ENCODE measurements at regions of chr9 and their contacts with region 1.

Region 1: DNA sequence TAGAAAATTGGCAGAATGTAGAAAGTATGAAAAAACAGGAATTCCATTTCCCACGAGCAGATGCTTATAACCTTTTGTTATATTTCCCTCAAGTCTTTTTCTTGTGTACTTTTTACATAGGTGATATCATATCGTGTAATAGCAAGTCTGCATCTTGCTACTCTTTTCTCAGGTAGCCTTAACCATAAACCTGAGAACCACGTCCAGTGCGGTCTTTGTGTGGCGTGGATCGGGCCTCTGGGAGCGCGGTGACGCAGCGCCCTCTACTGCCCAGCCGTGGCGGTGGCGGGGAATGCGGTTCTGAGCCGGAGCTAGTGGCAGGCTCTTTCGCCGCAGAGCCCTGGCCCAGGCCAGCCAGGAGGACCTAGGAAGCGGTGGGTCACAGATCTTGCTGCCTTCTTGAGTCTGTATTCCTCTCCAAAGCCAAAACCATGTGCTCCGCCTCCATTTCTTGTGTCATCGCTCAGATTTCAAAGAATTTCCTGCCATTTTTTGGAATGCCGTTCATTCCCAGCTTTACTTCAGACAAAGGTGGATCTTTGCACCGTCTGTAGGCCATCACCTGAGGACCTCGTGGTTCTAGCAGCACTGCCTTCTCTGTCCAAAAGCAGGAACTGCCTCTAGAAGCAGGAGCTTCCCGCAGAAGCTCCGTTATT is 71.9 kb downstream of the MVB12B start:
- DNase-seq: peak; percentile 74 to 98
- H3K4me3 ChIP-seq: no peak overlapping the region
- CTCF ChIP-seq: peak in 1 of 3 donors; percentile 90
- POLR2A ChIP-seq: no peak

Region 2: GRCh38 chr9:125400725-125401716 is 997.5 kb before region 1 on chr9:
- intact Hi-C with region 1: loop called (anchors 5 kb)
- DNase-seq: no peak
- H3K4me3 ChIP-seq: no peak overlapping the region
- CTCF ChIP-seq: no peak
- POLR2A ChIP-seq: no peak

Region 3: DNA sequence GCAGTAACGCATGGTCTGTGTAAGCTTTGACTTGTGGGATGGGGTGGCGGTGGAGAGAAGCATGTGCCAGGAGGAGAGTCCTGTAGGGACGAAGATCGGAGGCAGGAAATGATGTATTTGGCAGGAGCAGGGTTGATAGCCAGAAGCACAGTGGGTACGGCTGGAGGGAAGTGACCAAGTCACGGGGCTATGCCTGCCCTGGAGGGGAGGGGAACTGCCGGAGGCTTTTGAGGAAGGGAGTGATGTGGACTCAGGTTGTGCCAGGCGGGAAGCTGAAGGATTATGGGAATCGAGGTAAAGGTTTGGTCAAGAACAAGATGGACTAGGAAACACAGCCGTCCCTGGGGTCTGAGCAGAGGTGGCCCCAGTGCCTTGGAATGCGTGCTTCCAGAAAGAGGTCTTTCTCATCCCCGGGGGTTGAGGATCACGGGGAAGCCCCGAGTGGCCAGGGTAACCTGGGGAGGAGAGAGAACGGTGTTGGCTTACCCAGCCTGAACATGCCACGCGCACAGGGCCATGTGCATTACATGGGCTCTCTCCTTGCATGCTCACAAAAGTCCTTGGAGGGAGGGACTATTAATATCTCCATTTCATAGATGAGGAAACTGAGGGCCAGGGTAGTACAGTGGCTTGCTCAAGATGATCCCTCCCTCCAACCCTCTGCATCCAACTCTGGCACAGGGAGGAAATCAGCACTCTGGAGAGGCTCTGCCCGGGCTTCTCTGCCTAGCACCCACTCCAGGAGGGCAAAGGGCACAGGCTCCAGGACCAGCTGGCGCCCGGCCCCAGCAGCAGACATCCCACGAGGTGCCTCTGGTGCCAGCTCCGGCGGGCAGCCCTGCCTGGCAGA is 397.6 kb before region 1 on chr9:
- intact Hi-C with region 1: no loop called
- DNase-seq: no peak
- H3K4me3 ChIP-seq: no peak overlapping the region
- CTCF ChIP-seq: no peak
- POLR2A ChIP-seq: no peak

Region 4: GRCh38 chr9:126146254-126147145 is 252.0 kb before region 1 on chr9:
- intact Hi-C with region 1: no loop called
- DNase-seq: peak; percentile 10 to 83
- H3K4me3 ChIP-seq: no peak overlapping the region
- CTCF ChIP-seq: no peak
- POLR2A ChIP-seq: no peak

Region 5: GRCh38 chr9:126301985-126302603 is 96.4 kb before region 1 on chr9:
- intact Hi-C with region 1: loop called (anchors 5 kb)
- DNase-seq: peak; percentile 67 to 91
- H3K4me3 ChIP-seq: no peak overlapping the region
- CTCF ChIP-seq: peak in 1 of 3 donors; percentile 19
- POLR2A ChIP-seq: no peak

Region 6: DNA sequence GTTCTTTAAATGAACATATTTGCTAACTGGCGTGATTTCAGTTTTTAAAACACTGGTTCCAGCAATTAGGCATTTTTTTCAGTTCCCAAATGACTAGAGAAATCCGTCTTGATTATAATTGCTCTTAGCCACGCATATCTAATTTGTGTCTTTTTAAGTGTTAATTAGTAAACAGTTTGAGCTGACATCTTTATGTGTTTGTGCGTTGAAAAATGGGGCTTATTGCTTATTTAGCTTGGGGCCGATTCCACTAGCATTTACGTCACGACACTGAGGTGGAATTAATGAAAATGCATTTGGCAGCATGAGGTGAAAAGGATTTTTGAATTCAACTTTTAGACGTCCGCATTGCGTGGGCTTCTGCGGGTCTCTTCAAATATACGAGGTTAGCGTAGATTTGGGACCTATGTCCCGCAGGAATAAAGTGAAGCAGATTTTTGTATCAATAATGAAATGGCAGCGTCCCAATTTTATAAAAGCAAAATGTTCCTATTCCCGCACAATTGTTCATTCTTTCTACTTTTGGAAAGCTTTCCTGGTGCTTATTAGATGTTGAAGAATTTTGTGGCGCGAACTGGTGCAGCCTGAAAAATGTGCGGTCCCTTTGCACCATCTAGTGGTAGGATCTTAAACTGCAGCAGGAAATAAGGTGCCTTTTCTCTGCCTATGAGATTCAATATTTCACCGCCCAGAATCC is 92.5 kb after region 1 on chr9:
- intact Hi-C with region 1: loop called (anchors 10 kb)
- DNase-seq: peak in 1 of 2 donors; percentile 53
- H3K4me3 ChIP-seq: no peak overlapping the region
- CTCF ChIP-seq: peak in 1 of 3 donors; percentile 94
- POLR2A ChIP-seq: no peak

Measured in lower leg skin (tissue), 4 donors.